ENCODE measurements at regions of chr4 and their contacts with region 1.

Region 1: DNA sequence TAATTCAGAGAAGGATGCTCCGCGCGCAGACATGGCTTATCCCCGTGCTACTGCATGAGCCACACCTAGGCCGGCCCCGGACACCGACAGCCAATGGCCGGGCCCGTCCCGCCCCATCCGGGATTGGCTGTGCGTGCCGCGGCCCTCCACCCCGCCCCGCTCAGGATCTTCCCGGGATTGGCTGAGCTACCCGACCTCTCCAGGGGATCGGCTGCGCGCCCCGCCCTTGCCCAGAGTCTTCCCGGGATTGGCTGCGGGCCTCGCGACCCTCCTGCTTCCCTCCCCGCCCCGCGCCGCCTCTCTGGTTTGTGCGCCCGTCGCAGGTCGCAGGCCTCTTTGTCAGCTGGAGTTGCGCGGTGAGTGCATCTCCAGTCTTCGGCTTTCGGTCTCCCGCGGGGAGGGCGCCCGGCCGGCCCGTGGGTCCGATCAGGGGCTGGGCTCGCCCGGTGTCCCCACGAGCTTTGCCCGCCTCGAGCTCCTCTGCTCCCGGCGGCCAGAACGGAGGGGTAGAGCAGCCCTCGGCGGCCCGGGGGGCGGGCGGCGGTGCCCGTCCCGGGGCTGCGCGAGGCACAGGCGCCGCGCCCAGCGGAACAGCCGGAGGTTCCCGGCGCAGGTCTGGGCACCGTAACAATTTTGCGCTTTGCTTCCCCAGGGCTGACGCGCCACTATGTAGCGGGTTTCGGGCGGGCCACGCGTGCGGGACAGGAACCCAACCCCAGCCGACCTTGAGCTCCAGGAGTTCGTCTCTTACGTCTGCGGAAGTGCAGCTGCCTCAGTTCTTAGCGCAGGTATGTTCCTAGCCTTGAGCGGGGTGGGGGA is 38.8 kb downstream of the ERVMER34-1 start:
- DNase-seq: peak; percentile 91 to 98
- H3K4me3 ChIP-seq: peak overlapping the region; percentile 79
- H3K27ac ChIP-seq: peak overlapping the region; percentile 85
- H3K4me1 ChIP-seq: peaks cover 23% of the 10 kb centered on the region
- H3K27me3 ChIP-seq: no peaks in the 10 kb centered on the region
- CTCF ChIP-seq: no peak

Region 2: DNA sequence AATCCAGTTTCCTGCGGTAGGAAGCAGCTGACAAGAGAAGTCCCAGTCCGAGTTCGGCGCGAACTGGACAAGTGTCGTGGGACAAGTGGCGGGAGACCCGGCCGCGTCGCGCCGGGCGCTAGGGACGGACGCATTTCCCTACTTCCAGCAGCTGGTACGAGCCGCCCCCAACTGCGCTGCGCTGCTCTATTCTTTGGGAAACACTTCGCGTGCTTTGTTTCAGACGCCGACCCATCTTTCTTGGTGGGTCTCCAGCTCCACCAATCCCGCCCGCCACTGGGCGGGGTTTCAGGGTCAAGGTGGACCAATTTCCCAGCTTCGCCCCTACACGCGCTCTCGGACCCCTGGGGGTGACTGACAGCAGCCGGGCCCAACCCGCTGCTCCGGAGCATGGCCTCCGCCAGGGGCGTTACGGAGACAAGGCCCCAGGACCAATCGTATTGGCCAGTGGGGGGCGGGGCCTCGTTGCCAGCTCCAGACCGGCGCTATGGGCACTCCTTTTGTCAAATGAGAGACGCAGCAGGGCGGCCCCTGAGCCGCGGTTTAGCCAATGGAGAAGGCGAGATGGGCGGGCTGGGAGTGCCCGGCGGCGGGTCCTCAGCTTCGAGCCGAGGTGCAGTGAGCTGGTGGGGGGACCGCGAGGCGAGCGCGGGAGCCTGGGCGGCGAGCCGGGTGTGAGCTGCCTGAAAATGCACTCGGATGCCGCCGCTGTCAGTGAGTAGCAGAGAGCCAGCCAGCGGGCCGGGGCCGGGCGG is 869.6 kb before region 1 on chr4 and contains the start of gene DCUN1D4:
- CTCF ChIA-PET with region 1: no interaction called
- POLR2A ChIA-PET with region 1: interaction called, 6 read pairs
- intact Hi-C with region 1: loop called (anchors 10 kb)
- DNase-seq: peak; percentile 93 to 97
- H3K4me3 ChIP-seq: peak within 1 kb of the TSS; percentile 73
- H3K27ac ChIP-seq: peak within 1 kb of the TSS; percentile 51; the same call in 1 of the 2 replicates
- H3K4me1 ChIP-seq: peaks cover 9% of the 10 kb centered on the region
- H3K27me3 ChIP-seq: no peaks in the 10 kb centered on the region
- CTCF ChIP-seq: no peak; the same call in 1 of the 2 replicates
- total RNA-seq, gene DCUN1D4: 24.9 and 25.3 TPM in 2 replicates

Region 3: GRCh38 chr4:52477191-52477780 is 235.1 kb before region 1 on chr4:
- CTCF ChIA-PET with region 1: no interaction called
- POLR2A ChIA-PET with region 1: no interaction called
- intact Hi-C with region 1: no loop called
- DNase-seq: no peak
- H3K4me3 ChIP-seq: no peak overlapping the region
- H3K27ac ChIP-seq: no peak overlapping the region
- H3K4me1 ChIP-seq: no peaks in the 10 kb centered on the region
- H3K27me3 ChIP-seq: peaks cover 8% of the 10 kb centered on the region; the same call in 1 of the 2 replicates
- CTCF ChIP-seq: no peak

Region 4: GRCh38 chr4:52545099-52546069 is 167.0 kb before region 1 on chr4:
- CTCF ChIA-PET with region 1: no interaction called
- POLR2A ChIA-PET with region 1: no interaction called
- intact Hi-C with region 1: loop called (anchors 5 kb)
- DNase-seq: peak in 1 of 2 experiments; percentile 63
- H3K4me3 ChIP-seq: no peak overlapping the region
- H3K27ac ChIP-seq: no peak overlapping the region
- H3K4me1 ChIP-seq: no peaks in the 10 kb centered on the region
- H3K27me3 ChIP-seq: no peaks in the 10 kb centered on the region
- CTCF ChIP-seq: peak; percentile 89

Region 5: GRCh38 chr4:52588097-52588782 is 124.1 kb before region 1 on chr4:
- CTCF ChIA-PET with region 1: no interaction called
- POLR2A ChIA-PET with region 1: no interaction called
- intact Hi-C with region 1: loop called (anchors 10 kb)
- DNase-seq: peak in 1 of 2 experiments; percentile 5
- H3K4me3 ChIP-seq: no peak overlapping the region
- H3K27ac ChIP-seq: no peak overlapping the region
- H3K4me1 ChIP-seq: no peaks in the 10 kb centered on the region
- H3K27me3 ChIP-seq: no peaks in the 10 kb centered on the region
- CTCF ChIP-seq: peak; percentile 55

Region 6: GRCh38 chr4:52659001-52659721 is 53.2 kb before region 1 on chr4 and contains the start of gene USP46:
- CTCF ChIA-PET with region 1: no interaction called
- POLR2A ChIA-PET with region 1: interaction called, 4 read pairs
- intact Hi-C with region 1: loop called (anchors 5 kb)
- DNase-seq: peak in 1 of 2 experiments; percentile 69
- H3K4me3 ChIP-seq: peak within 1 kb of the TSS; percentile 92
- H3K27ac ChIP-seq: peak within 1 kb of the TSS; percentile 43; the same call in 1 of the 2 replicates
- H3K4me1 ChIP-seq: peaks cover 37% of the 10 kb centered on the region
- H3K27me3 ChIP-seq: no peaks in the 10 kb centered on the region
- CTCF ChIP-seq: no peak
- total RNA-seq, gene USP46: 13.8 and 17.1 TPM in 2 replicates

Region 7: DNA sequence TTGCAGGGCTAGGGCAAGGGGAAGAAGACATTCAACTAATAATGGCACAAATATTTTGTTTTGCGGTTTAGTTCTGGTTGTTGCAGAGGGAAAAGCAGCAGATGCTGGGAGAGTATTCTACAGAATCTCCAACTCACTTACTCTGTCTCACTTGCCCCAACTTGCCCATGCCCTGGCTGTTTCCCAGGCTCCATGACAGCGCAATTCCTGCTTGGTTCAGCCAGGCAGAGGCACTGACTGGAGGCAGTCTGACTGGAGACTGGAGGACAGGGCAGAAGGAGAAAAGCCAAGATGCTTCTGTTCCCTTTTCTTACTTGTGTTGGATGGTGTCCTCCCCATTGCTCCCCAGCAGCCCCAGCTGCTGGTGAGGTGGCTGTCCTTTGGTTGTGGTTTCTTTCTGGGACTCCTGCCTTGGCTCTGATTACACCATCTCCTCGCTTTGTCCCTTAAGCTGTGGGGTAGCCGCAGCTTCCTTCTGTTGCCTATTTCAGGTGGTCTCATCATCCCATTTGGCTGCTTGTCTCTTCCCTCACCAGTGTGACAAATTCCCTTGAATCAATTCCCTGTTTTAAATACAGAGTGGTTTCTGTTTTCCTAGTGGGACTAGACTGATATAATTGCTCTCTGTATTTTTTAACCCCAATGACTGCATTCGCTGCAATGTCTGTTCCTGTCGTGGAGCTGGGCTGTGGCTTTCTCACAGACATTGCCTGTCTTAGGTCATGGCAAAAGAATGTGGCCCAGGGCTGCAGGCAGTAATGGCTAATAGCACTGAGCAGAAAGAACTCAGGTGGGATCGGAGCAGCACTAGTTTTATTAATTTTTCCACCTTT is 125.6 kb after region 1 on chr4:
- CTCF ChIA-PET with region 1: no interaction called
- POLR2A ChIA-PET with region 1: no interaction called
- intact Hi-C with region 1: loop called (anchors 2 kb)
- DNase-seq: peak; percentile 69 to 75
- H3K4me3 ChIP-seq: peak overlapping the region; percentile 21; the same call in 1 of the 2 replicates
- H3K27ac ChIP-seq: peak overlapping the region; percentile 76
- H3K4me1 ChIP-seq: peaks cover 29% of the 10 kb centered on the region
- H3K27me3 ChIP-seq: no peaks in the 10 kb centered on the region
- CTCF ChIP-seq: no peak

Region 8: DNA sequence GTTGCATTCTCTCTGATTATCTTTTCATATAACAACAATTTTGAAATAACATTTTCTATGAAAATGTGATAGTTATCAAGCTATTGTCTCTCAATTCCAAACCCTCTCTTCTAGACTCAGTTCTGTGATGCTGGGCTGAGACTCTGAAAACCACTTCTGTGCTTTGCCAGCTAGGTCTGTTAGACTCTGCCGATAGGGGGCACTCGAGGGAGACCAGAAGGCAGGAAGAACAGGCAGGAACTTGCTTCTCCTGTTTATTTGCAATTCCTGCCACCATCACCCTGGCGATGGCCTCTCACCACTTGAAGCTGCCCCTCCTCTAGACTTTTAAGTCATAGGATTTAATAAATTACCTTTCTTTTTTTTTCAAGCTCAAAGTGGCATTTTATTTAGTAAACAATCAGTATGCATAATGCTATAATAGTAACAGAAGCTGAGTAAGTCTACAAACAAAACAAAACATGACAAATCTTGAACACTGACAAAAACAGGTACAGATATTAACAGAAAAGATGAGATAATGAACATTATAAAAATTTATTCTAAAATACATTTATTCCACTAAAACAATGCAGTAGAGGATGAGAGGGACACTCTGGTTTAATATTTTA is 199.4 kb after region 1 on chr4:
- CTCF ChIA-PET with region 1: no interaction called
- POLR2A ChIA-PET with region 1: no interaction called
- intact Hi-C with region 1: loop called (anchors 5 kb)
- DNase-seq: peak; percentile 59 to 71
- H3K4me3 ChIP-seq: no peak overlapping the region
- H3K27ac ChIP-seq: no peak overlapping the region
- H3K4me1 ChIP-seq: peaks cover 44% of the 10 kb centered on the region
- H3K27me3 ChIP-seq: no peaks in the 10 kb centered on the region
- CTCF ChIP-seq: peak; percentile 80

Measured in PC-9 (cell line).